ENCODE measurements at regions of chrX and their contacts with region 1.

Region 1: DNA sequence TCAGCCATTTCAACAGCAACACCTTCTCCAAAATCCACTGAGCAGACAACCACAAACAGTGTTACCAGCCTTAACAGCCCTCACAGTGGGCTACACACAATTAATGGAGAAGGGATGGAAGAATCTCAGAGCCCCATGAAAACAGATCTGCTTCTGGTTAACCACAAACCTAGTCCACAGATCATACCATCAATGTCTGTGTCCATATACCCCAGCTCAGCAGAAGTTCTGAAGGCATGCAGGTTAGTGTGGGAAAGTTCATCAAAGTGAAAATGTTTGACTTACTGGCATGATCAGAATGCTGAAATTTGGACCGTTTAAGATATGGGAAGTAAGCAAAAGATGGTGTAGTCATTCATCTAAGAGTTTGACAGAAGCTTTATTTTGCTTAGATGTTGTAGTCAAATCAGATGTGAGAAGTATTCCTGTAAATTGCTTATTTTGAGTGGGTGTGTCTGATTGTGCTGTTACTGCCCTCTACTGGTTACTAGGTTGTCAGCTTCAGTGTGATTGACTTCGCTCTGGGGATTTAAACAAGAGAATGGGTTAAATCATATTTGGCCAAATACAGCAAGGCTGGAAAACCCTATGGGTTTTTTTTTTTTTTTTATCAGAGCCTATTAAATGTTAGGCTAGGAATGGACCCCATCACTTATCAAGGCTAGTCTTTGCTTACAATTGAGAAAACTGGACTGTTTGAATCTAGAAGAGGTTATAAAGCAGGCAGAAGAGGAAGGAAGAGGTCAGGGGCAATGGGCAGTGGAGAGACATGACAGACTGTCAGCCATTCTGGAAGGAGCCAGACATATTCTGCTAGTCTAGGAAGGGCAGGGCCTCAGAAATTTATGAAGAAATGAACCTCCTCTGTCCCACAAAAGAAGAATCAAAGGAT is 130.3 kb downstream of the DIPK2B start:
- DNase-seq: no peak
- H3K4me3 ChIP-seq: no peak overlapping the region
- H3K27ac ChIP-seq: no peak overlapping the region
- H3K4me1 ChIP-seq: peaks cover 0 to 4% of the 10 kb centered on the region in 2 donors
- H3K27me3 ChIP-seq: no peaks in the 10 kb centered on the region
- CTCF ChIP-seq: peak; percentile 31 to 66 (median 50)

Region 2: DNA sequence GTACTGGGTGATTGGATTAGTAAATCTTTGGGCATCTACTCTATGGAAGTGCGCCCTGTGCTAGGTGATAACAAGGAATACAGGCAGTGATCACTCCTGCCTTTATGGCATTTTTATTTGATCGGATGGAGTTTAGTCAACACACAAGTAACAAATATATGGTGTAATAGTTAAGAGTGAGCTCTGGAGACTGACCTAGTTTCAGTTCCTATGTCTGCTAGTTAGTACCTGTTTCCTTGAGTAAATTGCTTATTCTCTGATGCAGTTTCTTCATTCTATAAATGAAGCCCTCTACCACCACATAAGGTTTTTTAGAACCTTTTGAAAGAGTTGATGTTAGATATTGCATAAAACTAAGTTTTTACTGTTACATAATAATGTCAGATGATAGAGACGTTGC is 62.8 kb before region 1 on chrX:
- intact Hi-C with region 1: loop called (anchors 10 kb)
- DNase-seq: no peak
- H3K4me3 ChIP-seq: no peak overlapping the region
- H3K27ac ChIP-seq: no peak overlapping the region
- H3K4me1 ChIP-seq: no peaks in the 10 kb centered on the region
- H3K27me3 ChIP-seq: no peaks in the 10 kb centered on the region
- CTCF ChIP-seq: no peak

Region 3: DNA sequence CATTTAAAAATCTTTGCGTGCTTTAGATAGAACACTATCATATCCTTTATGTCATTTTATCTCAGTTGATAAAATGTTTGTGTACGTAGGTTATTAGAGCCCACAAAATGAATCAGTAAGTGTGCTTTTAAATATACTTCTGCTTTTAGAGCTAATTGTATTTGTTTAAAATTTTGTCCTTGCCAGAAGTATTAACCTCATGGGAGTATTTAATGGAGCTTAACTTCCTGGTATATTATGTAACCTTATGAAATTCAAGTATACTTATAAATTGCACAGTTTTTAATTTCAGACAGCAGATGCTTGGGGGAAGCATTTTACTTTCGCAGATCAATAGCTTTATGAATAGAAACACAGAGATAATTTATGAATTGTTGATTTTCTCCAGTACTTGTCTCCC is 40.1 kb after region 1 on chrX:
- intact Hi-C with region 1: no loop called
- DNase-seq: no peak
- H3K4me3 ChIP-seq: no peak overlapping the region
- H3K27ac ChIP-seq: no peak overlapping the region
- H3K4me1 ChIP-seq: no peaks in the 10 kb centered on the region
- H3K27me3 ChIP-seq: no peaks in the 10 kb centered on the region
- CTCF ChIP-seq: no peak

Region 4: DNA sequence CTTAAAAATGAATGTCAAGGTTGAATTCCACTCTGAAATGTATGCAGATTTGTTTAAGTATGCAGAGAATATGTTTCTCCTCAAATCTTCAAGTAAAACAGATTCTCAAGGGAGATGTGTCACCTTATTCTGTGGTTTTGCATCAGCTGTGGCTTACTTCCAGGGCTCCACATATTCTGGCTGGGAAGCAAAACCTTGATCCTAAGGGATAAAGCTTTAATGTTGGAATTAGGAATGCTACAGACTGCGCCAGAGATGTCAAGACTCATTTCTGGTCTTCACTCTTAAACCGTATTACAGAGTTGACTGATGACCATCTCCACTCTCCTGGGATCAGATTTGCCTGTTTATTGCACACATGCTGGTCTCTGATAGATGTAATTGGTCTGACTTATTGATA is 274.2 kb after region 1 on chrX:
- intact Hi-C with region 1: no loop called
- DNase-seq: no peak
- H3K4me3 ChIP-seq: no peak overlapping the region
- H3K27ac ChIP-seq: no peak overlapping the region
- H3K4me1 ChIP-seq: no peaks in the 10 kb centered on the region
- H3K27me3 ChIP-seq: no peaks in the 10 kb centered on the region
- CTCF ChIP-seq: no peak